Gastrocnemius medialis (tissue), 4 donors: ENCODE measurements at regions of chr12 and their contacts with region 1.

Region 1: GRCh38 chr12:64222009-64222765 is at the start of gene KICS2:
- DNase-seq: peak; percentile 83 to 90
- ATAC-seq: peak; percentile 96 to 97
- H3K4me3 ChIP-seq: peak within 1 kb of the TSS; percentile 82 to 91 (median 88)
- H3K27ac ChIP-seq: peak within 1 kb of the TSS; percentile 93 to 95 (median 94)
- H3K4me1 ChIP-seq: peaks cover 10 to 18% of the 10 kb centered on the region in 2 donors
- H3K27me3 ChIP-seq: no peaks in the 10 kb centered on the region
- CTCF ChIP-seq: peak in 1 of 5 experiments; percentile 21
- POLR2A ChIP-seq: peak; percentile 75 to 93
- total RNA-seq, gene KICS2: 5.1 to 17.9 (median 11.0) TPM

Region 2: DNA sequence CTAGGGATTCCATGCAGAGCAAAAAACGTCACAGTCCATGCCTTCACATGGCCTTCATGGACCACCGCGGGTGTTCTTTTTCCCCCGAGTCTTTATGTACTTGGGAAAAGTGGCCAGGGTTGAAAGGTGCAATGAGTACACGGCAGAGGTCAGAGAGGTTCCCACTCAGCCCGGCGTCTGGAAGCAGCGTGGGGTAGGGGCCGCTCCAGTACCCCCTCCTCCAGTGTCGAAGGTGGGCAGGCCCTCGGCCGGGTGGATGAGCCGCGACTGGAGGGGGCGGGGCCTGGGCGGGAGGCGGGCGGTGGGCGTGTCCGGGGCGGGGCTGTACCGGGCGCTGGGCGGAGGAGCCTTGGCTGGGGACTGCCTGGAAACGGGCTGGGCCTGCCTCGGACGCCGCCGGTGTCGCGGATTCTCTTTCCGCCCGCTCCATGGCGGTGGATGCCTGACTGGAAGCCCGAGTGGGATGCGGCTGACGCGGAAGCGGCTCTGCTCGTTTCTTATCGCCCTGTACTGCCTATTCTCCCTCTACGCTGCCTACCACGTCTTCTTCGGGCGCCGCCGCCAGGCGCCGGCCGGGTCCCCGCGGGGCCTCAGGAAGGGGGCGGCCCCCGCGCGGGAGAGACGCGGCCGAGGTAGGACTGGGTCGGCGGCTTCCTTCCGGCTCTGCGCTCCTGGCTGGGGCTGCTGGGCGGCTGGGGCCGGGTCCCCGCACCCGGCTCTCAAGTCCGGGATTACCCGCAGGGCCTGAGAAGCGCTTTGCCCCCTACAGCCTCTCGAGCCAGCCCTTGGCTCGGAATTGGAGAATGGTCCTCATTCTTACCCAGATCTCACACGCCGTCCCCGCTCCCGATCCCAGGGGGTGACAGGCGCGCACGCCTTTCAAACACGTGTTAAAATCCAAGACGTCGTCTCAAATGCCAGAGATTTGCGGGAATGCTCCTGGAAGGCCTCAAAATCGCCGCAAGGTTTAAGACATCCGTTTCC is 442.4 kb before region 1 on chr12 and contains the start of gene RXYLT1:
- in situ Hi-C with region 1: no loop called
- intact Hi-C with region 1: loop called (anchors 5 kb)
- DNase-seq: peak; percentile 74 to 76
- ATAC-seq: peak; percentile 95 to 97
- H3K4me3 ChIP-seq: peak within 1 kb of the TSS; percentile 66 to 78 (median 76)
- H3K27ac ChIP-seq: peak within 1 kb of the TSS; percentile 78 to 89 (median 82)
- H3K4me1 ChIP-seq: peaks cover 11 to 13% of the 10 kb centered on the region in 2 donors
- H3K27me3 ChIP-seq: no peaks in the 10 kb centered on the region
- CTCF ChIP-seq: peak in 1 of 5 experiments; percentile 26
- POLR2A ChIP-seq: peak; percentile 53 to 56
- total RNA-seq, gene RXYLT1: 9.4 to 16.5 (median 14.1) TPM

Region 3: DNA sequence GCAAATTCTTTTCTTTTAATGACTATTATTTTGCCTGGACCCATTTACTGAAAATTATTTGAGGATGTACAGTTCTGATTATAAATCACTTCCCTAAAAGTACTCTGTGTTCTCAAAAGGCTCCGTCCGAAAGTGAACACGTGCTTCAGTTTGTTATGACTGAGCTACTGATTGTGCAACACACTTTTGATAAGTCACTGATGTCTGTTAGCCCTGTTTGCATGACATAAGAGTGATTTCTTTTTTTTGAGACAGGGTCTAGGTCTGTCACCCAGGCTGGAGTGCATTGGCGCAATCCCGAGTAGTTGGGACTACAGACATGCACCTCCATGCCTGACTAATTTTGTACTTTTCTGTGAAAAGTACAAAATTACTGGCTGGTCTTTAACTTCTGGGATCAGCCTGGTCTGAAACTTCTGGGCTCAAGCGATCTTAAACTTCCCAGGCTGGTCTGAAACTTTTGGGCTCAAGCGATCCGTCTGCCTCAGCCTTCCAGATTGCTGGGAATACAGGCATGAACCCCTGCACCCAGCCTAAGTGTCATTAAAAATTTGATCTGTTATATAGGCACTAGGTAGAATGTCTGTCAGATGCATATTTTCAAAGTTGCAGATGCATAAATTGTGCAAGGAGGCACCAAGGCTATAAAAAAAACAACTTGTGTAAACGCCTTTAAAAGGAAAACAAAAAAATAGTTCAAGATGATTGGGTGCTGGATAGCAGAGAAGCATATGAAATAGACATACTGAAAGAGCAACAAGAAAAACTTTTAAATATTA is 266.2 kb before region 1 on chr12:
- in situ Hi-C with region 1: no loop called
- intact Hi-C with region 1: no loop called
- DNase-seq: peak; percentile 45 to 53
- ATAC-seq: peak; percentile 92 to 94
- H3K4me3 ChIP-seq: no peak overlapping the region
- H3K27ac ChIP-seq: peak overlapping the region; percentile 39 to 69 (median 52)
- H3K4me1 ChIP-seq: peaks cover 0 to 10% of the 10 kb centered on the region in 2 donors
- H3K27me3 ChIP-seq: no peaks in the 10 kb centered on the region
- CTCF ChIP-seq: no peak
- POLR2A ChIP-seq: no peak

Region 4: GRCh38 chr12:64088431-64089349 is 133.5 kb before region 1 on chr12:
- in situ Hi-C with region 1: no loop called
- intact Hi-C with region 1: loop called (anchors 5 kb)
- DNase-seq: peak; percentile 48 to 69
- ATAC-seq: peak; percentile 87 to 91
- H3K4me3 ChIP-seq: peak overlapping the region in 1 of 4 donors; percentile 21
- H3K27ac ChIP-seq: peak overlapping the region; percentile 44 to 67 (median 52)
- H3K4me1 ChIP-seq: peaks cover 15 to 25% of the 10 kb centered on the region in 2 donors
- H3K27me3 ChIP-seq: no peaks in the 10 kb centered on the region
- CTCF ChIP-seq: no peak
- POLR2A ChIP-seq: no peak

Region 5: GRCh38 chr12:64181504-64182291 is 40.5 kb before region 1 on chr12:
- in situ Hi-C with region 1: no loop called
- intact Hi-C with region 1: loop called (anchors 2 kb)
- DNase-seq: peak; percentile 33
- ATAC-seq: peak; percentile 88
- H3K4me3 ChIP-seq: no peak overlapping the region
- H3K27ac ChIP-seq: peak overlapping the region in 1 of 4 donors; percentile 30
- H3K4me1 ChIP-seq: peaks cover 0 to 16% of the 10 kb centered on the region in 2 donors
- H3K27me3 ChIP-seq: no peaks in the 10 kb centered on the region
- CTCF ChIP-seq: peak in 4 of 5 experiments; percentile 33 to 63 (median 48)
- POLR2A ChIP-seq: no peak

Region 6: DNA sequence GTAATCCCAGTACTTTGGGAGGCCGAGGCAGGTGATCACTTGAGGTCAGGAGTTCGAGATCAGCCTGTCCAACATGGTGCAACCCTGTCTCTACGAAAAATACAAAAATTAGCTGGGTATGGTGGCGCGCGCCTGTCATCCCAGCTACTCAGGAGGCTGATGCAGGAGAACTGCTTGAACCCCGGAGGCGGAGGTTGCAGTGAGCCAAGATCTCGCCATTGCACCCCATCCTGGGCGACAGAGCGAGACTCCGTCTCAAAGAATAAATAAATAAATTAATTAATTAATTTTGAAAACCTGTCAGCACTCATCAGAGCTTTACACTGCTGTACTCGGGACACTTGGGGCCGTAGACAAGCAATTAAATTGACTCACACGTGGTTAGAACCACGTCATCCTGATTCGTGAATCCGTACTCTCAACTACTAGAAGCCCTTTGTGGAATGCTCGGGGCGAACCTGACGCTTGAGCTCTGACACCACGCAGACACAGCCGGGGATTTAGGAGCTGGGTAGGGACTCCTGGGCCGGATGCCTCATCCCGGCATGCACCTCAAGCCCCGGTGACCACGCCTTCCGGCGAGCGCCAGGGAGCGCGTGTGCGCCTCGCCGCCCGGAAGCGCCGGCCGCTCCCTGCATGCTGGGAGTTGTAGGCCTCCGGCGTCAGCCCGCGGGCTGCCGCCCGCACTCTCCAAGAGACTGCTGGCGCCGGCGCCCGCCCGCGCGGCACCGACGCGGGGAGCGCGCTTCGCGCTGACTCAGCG is 181.7 kb after region 1 on chr12 and contains the start of gene XPOT:
- in situ Hi-C with region 1: loop called in 1 of 4 experiments (anchors 5 kb)
- intact Hi-C with region 1: loop called (anchors 1 kb)
- DNase-seq: peak; percentile 84 to 95
- ATAC-seq: peak; percentile 88 to 93
- H3K4me3 ChIP-seq: peak within 1 kb of the TSS; percentile 93 to 99 (median 98)
- H3K27ac ChIP-seq: peak within 1 kb of the TSS; percentile 100
- H3K4me1 ChIP-seq: peaks cover 10 to 12% of the 10 kb centered on the region in 2 donors
- H3K27me3 ChIP-seq: no peaks in the 10 kb centered on the region
- CTCF ChIP-seq: peak in 1 of 5 experiments; percentile 22
- POLR2A ChIP-seq: no peak
- total RNA-seq, gene XPOT: 21.1 to 27.1 (median 25.1) TPM

Region 7: DNA sequence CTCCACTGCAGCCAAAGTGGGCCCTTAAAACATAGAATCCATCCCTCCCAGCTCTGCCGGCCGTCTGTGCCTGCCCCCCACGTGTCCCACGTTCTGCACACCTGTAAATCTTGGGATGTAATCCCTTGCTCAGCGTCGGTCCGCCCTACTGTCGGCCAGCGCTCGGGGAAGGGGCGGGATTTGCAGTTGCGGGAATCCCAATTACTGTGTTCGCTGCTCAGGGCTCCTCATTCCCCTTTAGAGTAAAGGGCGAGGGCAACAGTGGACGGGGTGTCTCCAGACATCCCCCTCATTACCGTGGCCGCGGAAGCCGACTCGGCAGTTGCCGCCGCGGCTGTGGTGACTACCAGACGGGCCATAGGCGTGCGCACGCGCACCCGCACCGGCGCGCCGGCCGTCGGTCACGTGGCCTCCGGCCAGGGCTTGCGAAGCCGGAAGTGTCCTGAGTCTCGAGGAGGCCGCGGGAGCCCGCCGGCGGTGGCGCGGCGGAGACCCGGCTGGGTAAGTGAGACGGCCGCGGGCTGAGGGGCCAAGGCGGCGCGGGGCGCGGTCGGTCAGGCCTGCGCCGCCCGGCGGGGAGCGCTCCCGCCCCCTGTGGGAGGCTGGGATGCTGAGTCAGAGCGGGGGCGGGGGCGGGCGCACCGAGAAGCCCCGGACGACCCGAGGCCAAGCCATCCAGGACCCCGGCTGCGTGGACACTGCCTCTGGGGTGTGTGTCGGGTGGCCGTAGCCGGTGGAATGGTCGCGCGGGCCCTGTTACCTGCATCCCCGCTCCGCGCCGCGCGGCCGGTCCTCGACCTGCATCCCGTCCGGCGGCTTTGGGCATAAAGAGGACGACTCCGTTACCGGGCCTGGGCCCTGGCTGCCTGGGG is 229.7 kb after region 1 on chr12 and contains the start of gene TBK1:
- in situ Hi-C with region 1: no loop called
- intact Hi-C with region 1: loop called (anchors 1 kb)
- DNase-seq: peak; percentile 77 to 91
- ATAC-seq: peak; percentile 97 to 98
- H3K4me3 ChIP-seq: peak within 1 kb of the TSS; percentile 80 to 99 (median 90)
- H3K27ac ChIP-seq: peak within 1 kb of the TSS; percentile 89 to 99 (median 95)
- H3K4me1 ChIP-seq: peaks cover 12 to 16% of the 10 kb centered on the region in 2 donors
- H3K27me3 ChIP-seq: no peaks in the 10 kb centered on the region
- CTCF ChIP-seq: peak in 4 of 5 experiments; percentile 9 to 34 (median 20)
- POLR2A ChIP-seq: peak; percentile 90 to 94
- total RNA-seq, gene TBK1: 20.1 to 40.8 (median 27.6) TPM

Region 8: GRCh38 chr12:64759035-64759901 is 537.1 kb after region 1 on chr12 and contains the start of gene GNS:
- in situ Hi-C with region 1: no loop called
- intact Hi-C with region 1: loop called (anchors 2 kb)
- DNase-seq: peak; percentile 95
- ATAC-seq: peak; percentile 96
- H3K4me3 ChIP-seq: peak within 1 kb of the TSS; percentile 97 to 98 (median 97)
- H3K27ac ChIP-seq: peak within 1 kb of the TSS; percentile 90 to 93 (median 92)
- H3K4me1 ChIP-seq: peaks cover 12 to 19% of the 10 kb centered on the region in 2 donors
- H3K27me3 ChIP-seq: no peaks in the 10 kb centered on the region
- CTCF ChIP-seq: peak in 2 of 5 experiments; percentile 29 to 45
- POLR2A ChIP-seq: peak; percentile 36 to 70
- total RNA-seq, gene GNS: 41.9 to 56.5 (median 53.9) TPM